PC-3 (cell line): ENCODE measurements at regions of chr5 and their contacts with region 1.

Region 1: DNA sequence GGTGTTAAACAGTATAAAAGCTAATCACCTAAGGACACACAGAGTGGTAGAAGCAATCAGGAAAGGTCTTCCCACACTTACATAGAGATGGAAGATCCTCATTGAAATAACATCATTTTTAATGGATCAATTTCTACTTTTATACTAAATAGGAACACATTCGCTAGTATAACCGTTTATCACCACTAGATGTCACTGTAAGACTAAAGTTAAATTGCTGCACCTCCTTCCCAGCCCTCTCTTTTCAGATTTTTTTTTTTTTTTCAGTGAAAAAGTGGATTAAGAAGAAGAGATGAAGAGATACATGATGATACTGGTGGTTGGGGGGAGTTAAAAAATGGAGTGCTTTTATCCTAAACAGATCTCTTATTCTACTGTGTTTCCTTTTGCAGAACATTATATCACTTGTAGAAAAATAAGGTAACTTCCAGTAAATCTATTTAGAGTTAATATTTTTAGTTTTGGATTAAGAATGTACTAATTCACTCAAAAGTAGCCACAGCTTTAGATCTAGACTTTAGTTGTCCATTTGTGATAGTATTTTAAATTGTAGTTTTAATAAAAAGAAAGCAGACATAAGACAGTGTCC is 116.9 kb upstream of the ARRDC3 start:
- DNase-seq: peak; percentile 82
- ATAC-seq: peak; percentile 75
- H3K4me3 ChIP-seq: no peak overlapping the region
- H3K27ac ChIP-seq: no peak overlapping the region
- H3K4me1 ChIP-seq: no peaks in the 10 kb centered on the region
- H3K27me3 ChIP-seq: no peaks in the 10 kb centered on the region
- CTCF ChIP-seq: peak; percentile 92

Region 2: DNA sequence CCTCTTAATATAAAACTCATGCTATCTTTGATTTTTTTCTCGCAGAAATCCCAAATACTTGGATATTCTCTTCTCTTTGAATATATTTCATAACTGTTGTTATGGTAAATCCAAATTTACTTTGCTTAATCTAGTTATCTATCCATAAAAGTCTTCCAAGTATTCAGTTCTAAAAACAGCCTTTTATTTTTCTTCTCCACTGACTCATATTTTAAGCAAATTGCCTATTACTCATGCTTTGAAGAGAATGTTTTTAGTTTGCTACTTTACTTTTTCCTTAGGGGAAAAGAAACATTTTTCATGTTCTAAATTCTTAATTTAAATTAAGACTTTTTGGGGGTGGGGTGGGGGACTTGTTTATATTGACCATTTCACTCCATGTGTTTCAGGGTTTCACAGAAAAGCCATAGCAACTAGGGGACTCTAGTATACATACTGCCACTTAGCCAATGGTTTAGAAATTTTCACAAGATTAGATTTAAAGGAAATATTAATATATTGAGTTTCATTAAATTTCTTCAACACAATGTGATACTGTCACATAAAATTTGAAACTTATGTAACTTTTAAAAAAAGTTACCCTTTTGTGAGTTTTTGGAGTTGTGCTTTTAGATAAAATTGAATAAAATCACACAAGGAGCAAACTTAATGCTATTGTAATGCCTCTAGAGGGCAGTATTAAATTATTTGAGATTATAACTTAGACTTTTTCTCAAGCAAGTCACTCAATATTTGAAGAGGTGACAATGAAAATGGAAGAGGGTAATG is 428.9 kb after region 1 on chr5:
- CTCF ChIA-PET with region 1: no interaction called
- POLR2A ChIA-PET with region 1: no interaction called
- intact Hi-C with region 1: loop called (anchors 10 kb)
- DNase-seq: peak; percentile 67
- ATAC-seq: peak; percentile 72
- H3K4me3 ChIP-seq: no peak overlapping the region
- H3K27ac ChIP-seq: no peak overlapping the region
- H3K4me1 ChIP-seq: no peaks in the 10 kb centered on the region
- H3K27me3 ChIP-seq: peaks cover 4% of the 10 kb centered on the region; the same call in 1 of the 2 replicates
- CTCF ChIP-seq: peak; percentile 86

Region 3: DNA sequence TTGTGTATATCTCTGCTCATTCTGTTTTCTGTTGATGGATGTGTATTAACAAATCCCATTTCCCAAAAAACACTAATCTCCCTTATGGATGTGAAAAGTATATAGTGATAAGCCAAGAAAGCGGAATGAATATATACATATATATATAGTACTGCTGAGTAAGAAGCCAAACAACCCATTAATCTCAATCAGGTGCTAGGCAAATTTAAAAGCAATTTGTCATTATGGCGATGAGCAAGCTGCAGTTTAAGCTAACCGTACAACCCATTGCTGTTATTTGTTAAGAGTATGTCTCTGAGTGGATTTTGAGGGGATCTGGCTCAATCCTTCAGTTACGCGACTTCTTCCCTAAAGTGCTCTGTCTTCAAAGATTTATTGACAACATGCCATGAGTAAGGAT is 523.5 kb after region 1 on chr5:
- CTCF ChIA-PET with region 1: no interaction called
- POLR2A ChIA-PET with region 1: no interaction called
- intact Hi-C with region 1: no loop called
- DNase-seq: no peak
- ATAC-seq: no peak
- H3K4me3 ChIP-seq: no peak overlapping the region
- H3K27ac ChIP-seq: no peak overlapping the region
- H3K4me1 ChIP-seq: peaks cover 16% of the 10 kb centered on the region
- H3K27me3 ChIP-seq: no peaks in the 10 kb centered on the region
- CTCF ChIP-seq: no peak